Sigmoid colon (tissue), 7 donors: ENCODE measurements at regions of chr15 and their contacts with region 1.

Region 1: DNA sequence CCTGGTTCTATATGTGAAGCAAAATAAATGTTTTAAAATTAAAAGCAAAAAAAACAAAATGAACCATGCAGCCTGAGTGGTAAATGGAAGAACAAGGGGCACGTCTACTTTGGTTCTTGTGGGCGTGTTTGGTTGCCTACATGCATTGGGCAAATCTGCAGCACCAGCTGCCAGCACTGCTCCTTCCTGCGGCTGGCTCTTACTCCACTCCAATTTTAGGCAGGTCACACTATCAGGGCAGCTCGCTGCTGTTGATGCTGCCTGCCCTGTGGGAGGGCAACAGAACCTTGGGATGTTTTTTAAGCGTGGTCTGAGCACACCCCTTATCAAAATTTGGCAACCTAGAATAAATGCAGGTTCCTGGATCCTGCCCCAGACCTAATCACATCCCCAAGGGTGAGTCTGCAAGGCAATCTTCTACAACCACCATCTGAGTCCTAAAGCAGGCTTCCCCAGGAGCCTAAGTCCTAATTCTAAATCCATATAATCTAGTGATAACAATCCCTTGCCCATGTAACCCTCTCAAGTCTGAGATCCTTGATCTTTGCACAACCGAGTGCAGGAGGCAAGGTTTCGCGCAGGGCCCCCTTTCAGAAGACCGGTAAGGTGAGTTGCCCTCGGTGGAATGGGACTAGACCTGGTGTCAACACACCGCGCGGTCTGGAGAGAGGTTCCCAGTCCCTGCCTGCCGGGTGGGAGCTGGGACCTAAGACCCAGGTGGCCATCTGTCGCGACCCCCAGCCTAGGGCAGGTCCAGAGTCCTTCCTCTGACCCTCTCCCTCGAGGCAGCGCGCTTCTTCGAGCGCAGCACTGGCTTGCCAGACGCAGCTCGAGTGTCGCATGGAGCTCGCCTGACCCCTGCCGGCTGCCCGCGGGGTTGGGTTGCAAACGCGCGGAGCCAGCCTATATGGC is 15.9 kb downstream of the IVD start:
- DNase-seq: peak; percentile 85
- H3K4me3 ChIP-seq: no peak overlapping the region
- H3K27ac ChIP-seq: no peak overlapping the region
- H3K4me1 ChIP-seq: peaks cover 0 to 17% (median 10%) of the 10 kb centered on the region in 4 donors
- H3K27me3 ChIP-seq: no peaks in the 10 kb centered on the region
- CTCF ChIP-seq: peak; percentile 91 to 94 (median 92)
- EP300 ChIP-seq: no peak
- POLR2A ChIP-seq: no peak

Region 2: DNA sequence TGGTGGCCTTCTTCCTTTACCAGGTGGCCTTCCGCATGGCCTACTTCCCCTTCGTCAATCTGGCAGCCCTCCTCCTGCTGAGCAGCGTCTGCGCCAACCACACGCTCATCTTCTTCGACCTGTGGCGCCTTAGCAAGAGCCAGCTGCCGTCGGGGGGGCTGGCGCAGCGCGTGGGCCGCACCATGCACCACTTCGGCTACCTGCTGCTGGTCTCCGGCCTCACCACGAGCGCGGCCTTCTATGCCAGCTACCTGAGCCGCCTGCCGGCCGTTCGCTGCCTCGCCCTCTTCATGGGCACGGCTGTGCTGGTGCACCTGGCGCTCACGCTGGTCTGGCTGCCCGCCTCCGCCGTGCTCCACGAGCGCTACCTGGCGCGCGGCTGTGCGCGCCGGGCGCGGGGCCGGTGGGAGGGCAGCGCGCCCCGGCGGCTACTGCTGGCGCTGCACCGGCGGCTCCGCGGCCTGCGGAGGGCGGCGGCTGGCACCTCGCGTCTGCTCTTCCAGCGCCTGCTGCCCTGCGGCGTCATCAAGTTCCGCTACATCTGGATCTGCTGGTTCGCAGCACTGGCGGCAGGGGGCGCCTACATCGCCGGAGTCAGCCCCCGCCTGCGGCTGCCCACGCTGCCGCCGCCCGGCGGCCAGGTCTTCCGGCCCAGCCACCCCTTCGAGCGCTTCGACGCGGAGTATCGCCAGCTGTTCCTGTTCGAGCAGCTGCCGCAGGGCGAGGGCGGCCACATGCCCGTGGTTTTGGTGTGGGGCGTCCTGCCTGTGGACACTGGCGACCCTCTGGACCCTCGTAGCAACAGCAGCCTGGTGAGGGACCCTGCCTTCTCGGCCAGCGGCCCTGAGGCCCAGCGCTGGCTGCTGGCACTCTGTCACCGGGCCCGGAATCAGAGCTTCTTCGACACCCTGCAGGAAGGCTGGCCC is 53.6 kb before region 1 on chr15:
- intact Hi-C with region 1: loop called (anchors 1 kb)
- DNase-seq: peak; percentile 92
- H3K4me3 ChIP-seq: peak overlapping the region in 3 of 4 donors; percentile 34 to 48 (median 41)
- H3K27ac ChIP-seq: peak overlapping the region; percentile 25 to 82 (median 74)
- H3K4me1 ChIP-seq: peaks cover 0 to 23% (median 21%) of the 10 kb centered on the region in 4 donors
- H3K27me3 ChIP-seq: no peaks in the 10 kb centered on the region
- CTCF ChIP-seq: peak; percentile 70 to 80 (median 76)
- EP300 ChIP-seq: no peak
- POLR2A ChIP-seq: no peak

Region 3: GRCh38 chr15:40441565-40442531 is 20.3 kb after region 1 on chr15:
- intact Hi-C with region 1: no loop called
- DNase-seq: no peak
- H3K4me3 ChIP-seq: peak overlapping the region; percentile 89 to 98 (median 92)
- H3K27ac ChIP-seq: peak overlapping the region; percentile 79 to 85 (median 82)
- H3K4me1 ChIP-seq: peaks cover 0 to 59% (median 51%) of the 10 kb centered on the region in 4 donors
- H3K27me3 ChIP-seq: peaks cover 6 to 16% (median 10%) of the 10 kb centered on the region in 3 donors
- CTCF ChIP-seq: peak in 1 of 4 experiments; percentile 11
- EP300 ChIP-seq: no peak
- POLR2A ChIP-seq: no peak